ENCODE measurements at regions of chr14 and their contacts with region 1.

Region 1: DNA sequence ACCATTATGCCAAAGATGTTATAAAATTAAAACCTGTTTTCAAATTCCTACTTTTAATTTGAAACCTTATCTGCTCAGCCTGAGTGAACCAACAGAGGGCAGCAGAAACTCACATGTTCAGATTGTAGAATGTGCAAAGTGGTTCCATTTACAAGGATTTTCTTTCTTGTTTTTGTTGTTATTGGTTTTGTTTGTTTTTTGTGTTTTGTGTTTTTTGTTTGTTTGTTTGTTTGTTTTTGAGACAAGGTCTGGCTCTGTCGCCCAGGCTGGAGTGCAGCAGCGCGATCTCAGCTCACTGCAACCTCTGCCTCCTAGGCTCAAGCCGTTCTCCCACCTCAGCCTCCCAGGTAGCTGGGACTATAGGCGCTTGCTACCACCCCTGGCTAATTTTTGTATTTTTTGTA is 22.8 kb upstream of the GARIN2 start:
- DNase-seq: peak in 2 of 4 experiments; percentile 19 to 44
- ATAC-seq: peak; percentile 78
- H3K4me3 ChIP-seq: no peak overlapping the region
- H3K27ac ChIP-seq: no peak overlapping the region
- H3K4me1 ChIP-seq: no peaks in the 10 kb centered on the region
- H3K27me3 ChIP-seq: no peaks in the 10 kb centered on the region
- CTCF ChIP-seq: peak; percentile 66 to 86 (median 66); a peak in 5 of 6 replicates
- EP300 ChIP-seq: no peak
- POLR2A ChIP-seq: no peak
- RAD21 ChIP-seq: peak; percentile 92 to 97

Region 2: DNA sequence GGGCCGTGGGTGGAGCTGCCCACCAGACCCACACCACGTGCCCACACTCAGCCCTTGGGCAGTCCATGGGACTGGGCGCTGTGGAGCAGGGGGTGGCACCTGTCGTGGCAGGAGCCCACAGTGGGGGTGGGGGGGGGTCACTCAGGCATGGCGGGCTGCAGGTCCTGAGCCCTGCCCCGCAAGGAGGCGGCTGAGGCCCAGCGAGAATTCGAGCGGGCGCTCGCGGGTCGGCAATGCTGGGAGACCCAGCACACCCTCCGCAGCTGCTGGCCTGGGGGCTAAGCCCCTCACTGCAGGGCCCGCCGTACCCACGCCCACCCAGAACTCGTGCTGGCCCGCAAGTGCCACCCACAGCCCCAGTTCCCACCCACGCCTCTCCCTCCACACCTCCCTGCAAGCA is 109.8 kb before region 1 on chr14:
- CTCF ChIA-PET with region 1: no interaction called
- POLR2A ChIA-PET with region 1: no interaction called
- in situ Hi-C with region 1: no loop called
- intact Hi-C with region 1: no loop called
- DNase-seq: no peak
- ATAC-seq: no peak
- H3K4me3 ChIP-seq: no peak overlapping the region
- H3K27ac ChIP-seq: no peak overlapping the region
- H3K4me1 ChIP-seq: no peaks in the 10 kb centered on the region
- H3K27me3 ChIP-seq: no peaks in the 10 kb centered on the region
- CTCF ChIP-seq: no peak
- EP300 ChIP-seq: no peak
- POLR2A ChIP-seq: no peak
- RAD21 ChIP-seq: no peak

Region 3: DNA sequence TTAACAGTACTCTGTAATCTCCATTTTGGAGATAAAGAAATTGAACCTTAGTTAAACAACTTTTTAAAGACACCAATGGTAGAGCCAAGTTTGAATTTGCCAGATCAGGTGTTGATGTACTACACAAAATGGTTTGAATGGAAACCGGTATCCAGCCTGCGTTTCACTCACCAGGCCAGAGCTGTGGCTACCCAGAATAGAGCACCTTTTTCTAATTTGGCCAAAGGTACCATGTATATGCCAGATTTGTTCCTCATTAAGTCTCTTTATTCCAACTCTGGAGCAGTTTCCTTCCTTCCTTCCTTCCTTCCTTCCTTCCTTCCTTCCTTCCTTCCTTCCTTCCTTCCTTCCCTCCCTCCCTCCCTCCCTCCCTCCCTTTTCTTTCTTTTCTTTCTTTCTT is 114.1 kb after region 1 on chr14:
- CTCF ChIA-PET with region 1: interaction called, 27 read pairs
- POLR2A ChIA-PET with region 1: no interaction called
- in situ Hi-C with region 1: loop called (anchors 5 kb)
- intact Hi-C with region 1: no loop called
- DNase-seq: no peak
- ATAC-seq: no peak
- H3K4me3 ChIP-seq: no peak overlapping the region
- H3K27ac ChIP-seq: no peak overlapping the region
- H3K4me1 ChIP-seq: no peaks in the 10 kb centered on the region
- H3K27me3 ChIP-seq: no peaks in the 10 kb centered on the region
- CTCF ChIP-seq: no peak
- EP300 ChIP-seq: no peak
- POLR2A ChIP-seq: no peak
- RAD21 ChIP-seq: no peak

Region 4: DNA sequence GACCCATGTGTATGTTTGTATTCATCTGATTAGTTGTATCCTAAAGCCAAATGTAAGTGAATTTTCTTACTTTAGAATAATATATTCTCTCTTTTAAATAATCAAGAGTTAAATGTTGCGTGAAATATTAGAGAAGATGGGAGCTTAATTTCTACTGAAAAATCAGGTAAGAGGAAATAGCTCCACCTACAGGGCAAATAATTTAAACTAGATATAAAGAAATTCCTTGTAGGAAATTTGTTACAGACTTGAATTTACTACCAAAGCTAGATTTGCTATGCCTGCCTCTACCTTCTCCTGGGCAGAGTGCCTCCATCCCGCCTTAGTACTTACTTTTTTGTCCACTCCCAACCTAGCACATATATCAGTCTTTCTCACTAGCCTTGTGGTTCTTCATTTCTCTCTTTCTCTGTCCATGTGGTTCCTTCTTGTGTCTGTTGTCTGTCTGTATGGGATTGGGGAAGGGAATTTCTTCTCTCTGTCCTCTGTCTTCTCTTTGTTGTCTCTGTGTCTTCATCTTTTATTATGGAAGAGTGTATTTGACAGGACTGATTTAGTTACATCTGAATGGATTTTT is 119.5 kb after region 1 on chr14:
- CTCF ChIA-PET with region 1: interaction called, 27 read pairs
- POLR2A ChIA-PET with region 1: no interaction called
- in situ Hi-C with region 1: loop called (anchors 5 kb)
- intact Hi-C with region 1: loop called (anchors 1 kb)
- DNase-seq: peak in 3 of 4 experiments; percentile 7 to 28 (median 7)
- ATAC-seq: no peak
- H3K4me3 ChIP-seq: no peak overlapping the region
- H3K27ac ChIP-seq: no peak overlapping the region
- H3K4me1 ChIP-seq: no peaks in the 10 kb centered on the region
- H3K27me3 ChIP-seq: no peaks in the 10 kb centered on the region
- CTCF ChIP-seq: peak; percentile 30 to 64 (median 37); a peak in 3 of 6 replicates
- EP300 ChIP-seq: no peak
- POLR2A ChIP-seq: no peak
- RAD21 ChIP-seq: peak; percentile 32 to 68

Region 5: GRCh38 chr14:67335781-67336180 is 169.3 kb after region 1 on chr14:
- CTCF ChIA-PET with region 1: interaction called, 5 read pairs
- POLR2A ChIA-PET with region 1: no interaction called
- in situ Hi-C with region 1: no loop called
- intact Hi-C with region 1: loop called (anchors 2 kb)
- DNase-seq: peak in 2 of 4 experiments; percentile 7 to 28
- ATAC-seq: no peak
- H3K4me3 ChIP-seq: no peak overlapping the region
- H3K27ac ChIP-seq: no peak overlapping the region
- H3K4me1 ChIP-seq: no peaks in the 10 kb centered on the region; a peak in 1 of 5 replicates
- H3K27me3 ChIP-seq: no peaks in the 10 kb centered on the region
- CTCF ChIP-seq: peak; percentile 13 to 43 (median 38); a peak in 4 of 6 replicates
- EP300 ChIP-seq: no peak
- POLR2A ChIP-seq: no peak
- RAD21 ChIP-seq: peak in 1 of 2 experiments; percentile 42; a peak in 2 of 4 replicates

Measured in K562 (cell line).